CD4-positive, alpha-beta memory T cell (primary cell): ENCODE measurements at regions of chr5 and their contacts with region 1.

Region 1: GRCh38 chr5:73447530-73448462 is 781 bp downstream of the FOXD1 start:
- DNase-seq: peak; percentile 49 to 58 (median 56)
- H3K4me3 ChIP-seq: peak overlapping the region in 1 of 2 donors; percentile 36
- H3K4me3 Mint-ChIP-seq: peak overlapping the region; percentile 85 to 93 (median 86)
- H3K27ac ChIP-seq: no peak overlapping the region
- H3K27ac Mint-ChIP-seq: peak overlapping the region in 4 of 7 donors; percentile 71 to 90 (median 78)
- H3K4me1 ChIP-seq: peaks cover 22% of the 10 kb centered on the region
- H3K4me1 Mint-ChIP-seq: peaks cover 6 to 28% (median 17%) of the 10 kb centered on the region in 4 donors
- H3K27me3 ChIP-seq: peaks cover 82% of the 10 kb centered on the region
- H3K27me3 Mint-ChIP-seq: peaks cover 54% of the 10 kb centered on the region in 2 donors

Region 2: GRCh38 chr5:73387601-73388305 is 60.0 kb before region 1 on chr5:
- CTCF ChIA-PET with region 1: interaction called, 6 read pairs
- POLR2A ChIA-PET with region 1: interaction called, 14 read pairs
- intact Hi-C with region 1: loop called (anchors 1 kb)
- DNase-seq: peak; percentile 80 to 85 (median 82)
- H3K4me3 ChIP-seq: peak overlapping the region; percentile 3 to 17
- H3K4me3 Mint-ChIP-seq: peak overlapping the region; percentile 56 to 81 (median 71)
- H3K27ac ChIP-seq: no peak overlapping the region
- H3K27ac Mint-ChIP-seq: peak overlapping the region in 6 of 7 donors; percentile 17 to 79 (median 49)
- H3K4me1 ChIP-seq: peaks cover 34% of the 10 kb centered on the region
- H3K4me1 Mint-ChIP-seq: peaks cover 20 to 45% (median 34%) of the 10 kb centered on the region in 4 donors
- H3K27me3 ChIP-seq: peaks cover 9% of the 10 kb centered on the region
- H3K27me3 Mint-ChIP-seq: peaks cover 6 to 10% of the 10 kb centered on the region in 2 donors